Activated T-helper 1 cell treated with anti-CD3 and anti-CD28 coated beads, Interleukin-12 subunit alpha, Interleukin-12 subunit beta, Interleukin-2, Interleukin-4 antibody, amounts not matched to agents 30 ng/mL and 10 ng/mL and 1 ng/mL, durations not matched to agents 14 hours and 24 hours and 36 hours (primary cell): ENCODE measurements at regions of chr4 and their contacts with region 1.

Region 1: DNA sequence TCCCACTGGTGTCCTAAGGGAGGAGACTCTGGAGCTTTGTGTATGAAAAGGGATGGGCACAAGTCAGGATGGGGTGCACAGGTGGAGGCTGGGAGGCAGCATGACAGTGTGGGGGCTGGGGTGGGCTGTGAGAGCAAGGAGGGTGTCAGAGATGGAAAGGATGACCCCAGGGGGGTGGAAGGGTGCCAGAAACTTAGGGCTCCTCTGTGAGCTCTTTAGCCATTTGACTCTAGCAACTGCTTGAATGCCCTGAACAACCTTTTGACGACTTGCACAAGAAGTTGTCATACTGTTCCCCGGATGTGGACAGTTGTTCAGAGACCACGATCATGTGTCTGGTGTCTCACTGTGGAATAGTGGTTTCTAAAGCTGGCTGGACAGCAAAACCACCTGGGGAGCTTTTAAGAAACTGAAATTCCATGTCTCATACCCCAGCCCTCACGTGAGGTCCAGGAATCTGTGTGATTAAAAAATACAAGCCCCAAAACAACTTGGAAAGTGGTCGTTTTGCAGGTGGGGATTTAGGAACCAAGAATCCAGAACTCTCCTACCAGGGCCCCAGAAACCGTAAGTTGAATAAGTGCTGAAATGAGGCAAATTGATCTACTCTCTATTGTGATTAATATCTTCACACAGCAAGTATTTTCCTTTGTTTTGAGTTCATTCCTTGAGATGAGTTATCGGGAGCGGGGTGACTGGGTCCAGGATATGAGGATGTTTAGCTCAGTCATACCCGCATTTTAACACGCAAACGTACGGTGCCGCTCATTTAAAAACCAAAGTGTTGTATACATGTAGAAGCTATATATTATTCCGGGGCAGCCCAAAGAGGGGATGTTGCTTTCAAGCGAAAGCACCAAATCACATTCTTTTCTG is 3.4 kb downstream of the RHOH start:
- DNase-seq: peak; percentile 76
- H3K4me3 Mint-ChIP-seq: peak overlapping the region; percentile 95
- H3K27ac Mint-ChIP-seq: peak overlapping the region; percentile 97
- H3K4me1 Mint-ChIP-seq: peaks cover 60% of the 10 kb centered on the region
- H3K27me3 Mint-ChIP-seq: no peaks in the 10 kb centered on the region

Region 2: DNA sequence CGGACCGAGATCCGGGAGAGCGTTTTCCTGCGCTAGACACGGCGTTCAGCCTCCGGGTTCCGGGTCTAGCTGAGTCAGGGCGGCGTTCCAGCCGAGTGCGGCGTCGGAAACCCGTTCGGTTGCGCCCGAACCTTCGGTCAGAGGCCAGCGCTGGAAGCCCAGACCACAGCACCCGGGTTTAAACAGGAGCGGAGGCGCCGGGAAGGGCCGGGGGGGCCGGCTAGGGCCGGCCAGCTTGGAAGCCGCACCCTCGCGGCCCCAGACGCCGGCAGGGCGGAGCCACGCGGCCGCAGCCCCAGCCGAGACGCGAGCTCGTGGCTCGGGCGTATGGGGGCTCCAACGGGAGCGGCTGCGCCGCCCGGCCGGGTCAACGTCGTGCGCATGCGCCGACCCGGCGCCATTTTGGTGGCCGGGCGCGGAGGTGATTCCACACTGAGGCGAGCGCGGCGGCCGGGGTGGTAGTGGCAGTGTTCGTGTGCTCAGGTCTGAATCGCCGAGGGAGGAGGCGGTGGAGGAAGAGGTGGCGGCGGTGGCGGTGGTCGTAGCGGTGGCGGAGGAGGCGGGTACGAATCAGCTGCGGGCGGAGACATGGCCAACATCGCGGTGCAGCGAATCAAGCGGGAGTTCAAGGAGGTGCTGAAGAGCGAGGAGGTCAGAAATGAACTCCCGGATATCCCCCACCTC is 502.4 kb before region 1 on chr4 and contains the start of gene UBE2K:
- intact Hi-C with region 1: loop called (anchors 5 kb)
- DNase-seq: peak; percentile 91
- H3K4me3 Mint-ChIP-seq: peak within 1 kb of the TSS; percentile 97
- H3K27ac Mint-ChIP-seq: peak within 1 kb of the TSS; percentile 97
- H3K4me1 Mint-ChIP-seq: peaks cover 37% of the 10 kb centered on the region
- H3K27me3 Mint-ChIP-seq: no peaks in the 10 kb centered on the region
- total RNA-seq, gene UBE2K: 92.2 and 96.4 TPM in 2 replicates

Region 3: GRCh38 chr4:40020221-40020943 is 179.9 kb before region 1 on chr4:
- intact Hi-C with region 1: no loop called
- DNase-seq: no peak
- H3K4me3 Mint-ChIP-seq: no peak overlapping the region
- H3K27ac Mint-ChIP-seq: no peak overlapping the region
- H3K4me1 Mint-ChIP-seq: no peaks in the 10 kb centered on the region
- H3K27me3 Mint-ChIP-seq: no peaks in the 10 kb centered on the region

Region 4: DNA sequence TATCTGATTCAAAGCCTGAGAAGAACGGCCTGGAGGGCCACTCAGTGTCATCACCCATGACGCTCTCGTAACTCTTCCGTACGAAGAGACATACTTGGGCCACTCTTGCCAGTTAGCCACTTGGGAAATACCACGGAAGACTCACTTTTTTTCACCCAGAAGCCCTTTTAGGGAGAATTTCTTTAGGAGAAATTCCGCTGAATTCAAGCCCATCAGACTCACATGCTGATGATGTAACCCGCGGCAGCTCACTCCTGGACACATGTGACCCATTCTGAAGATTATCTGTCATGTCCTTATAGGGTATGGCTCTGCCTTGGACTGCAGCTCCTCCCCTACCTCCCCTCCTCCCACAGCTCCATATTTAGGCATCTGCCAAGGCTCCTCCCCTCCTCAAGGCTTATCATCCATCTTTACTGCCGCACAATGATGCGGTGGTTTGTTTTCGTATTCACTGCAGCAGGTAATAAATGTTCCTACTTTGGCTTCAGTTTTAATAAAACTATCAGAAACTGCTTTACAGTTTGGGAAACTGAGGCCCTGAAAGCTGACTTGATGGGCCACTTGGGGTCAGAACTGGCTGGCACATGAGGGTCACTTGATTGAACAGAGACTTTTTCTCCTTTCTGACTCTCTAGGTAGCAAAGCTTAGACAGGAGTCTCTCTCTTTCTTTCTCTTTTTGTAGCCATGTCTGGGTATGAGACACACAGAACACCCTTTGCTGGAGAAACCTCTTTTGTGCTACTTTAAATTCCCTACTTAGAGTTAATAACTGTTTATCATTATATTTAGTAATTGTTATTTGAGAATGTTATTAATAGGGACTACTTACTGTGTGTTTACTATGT is 38.7 kb after region 1 on chr4:
- intact Hi-C with region 1: loop called (anchors 1 kb)
- DNase-seq: peak; percentile 72
- H3K4me3 Mint-ChIP-seq: peak overlapping the region; percentile 83
- H3K27ac Mint-ChIP-seq: peak overlapping the region; percentile 92
- H3K4me1 Mint-ChIP-seq: peaks cover 90% of the 10 kb centered on the region
- H3K27me3 Mint-ChIP-seq: no peaks in the 10 kb centered on the region

Region 5: GRCh38 chr4:40309250-40309774 is 109.1 kb after region 1 on chr4:
- intact Hi-C with region 1: loop called (anchors 1 kb)
- DNase-seq: peak; percentile 81
- H3K4me3 Mint-ChIP-seq: peak overlapping the region; percentile 67
- H3K27ac Mint-ChIP-seq: peak overlapping the region; percentile 94
- H3K4me1 Mint-ChIP-seq: peaks cover 88% of the 10 kb centered on the region
- H3K27me3 Mint-ChIP-seq: no peaks in the 10 kb centered on the region

Region 6: DNA sequence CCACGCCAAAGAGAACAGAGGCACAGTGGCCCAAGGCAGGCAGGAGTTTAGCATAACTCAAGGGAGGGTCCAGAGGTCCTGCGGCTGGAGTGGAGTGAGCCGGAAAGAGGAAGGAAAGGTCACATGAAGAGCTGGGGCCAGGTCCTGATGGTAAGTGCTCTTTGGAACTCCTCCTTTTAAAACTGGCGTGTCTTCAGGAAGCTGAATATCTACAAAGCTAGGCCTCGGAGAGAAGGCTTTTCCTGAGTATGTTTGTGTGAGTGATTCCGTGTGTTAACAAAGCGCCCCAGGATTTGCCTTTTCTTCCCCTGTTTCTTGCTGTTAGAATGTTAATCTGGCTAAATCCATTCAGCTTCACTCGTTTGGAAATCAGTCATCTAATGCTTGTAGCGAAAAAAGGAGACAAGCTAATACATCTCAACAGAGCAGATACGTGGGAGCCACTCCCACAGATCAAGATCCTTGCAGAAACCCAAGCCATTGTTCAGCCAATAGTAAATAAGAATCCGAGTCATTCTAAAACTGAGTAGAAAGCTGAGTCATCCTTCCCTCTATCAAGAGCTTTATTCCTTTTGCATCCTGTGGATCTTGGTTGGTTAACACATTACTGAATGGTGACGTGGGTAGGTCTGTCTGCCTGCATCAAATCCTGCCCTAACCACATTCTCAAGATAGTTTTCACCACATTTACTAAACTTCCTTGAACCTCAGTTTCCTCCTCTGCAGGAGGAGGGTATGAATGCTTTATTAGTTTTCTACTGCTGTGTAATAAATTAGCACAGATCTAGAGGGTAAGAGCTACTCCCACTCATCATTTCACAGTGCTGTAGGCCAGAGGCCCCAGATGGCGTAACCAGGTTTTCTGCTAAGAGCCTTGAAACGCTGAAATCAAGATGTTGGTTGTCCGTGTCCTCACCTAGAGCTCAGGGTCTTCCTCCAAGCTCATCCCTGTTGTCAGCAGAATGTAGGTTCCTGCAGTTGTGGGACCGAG is 472.6 kb after region 1 on chr4:
- intact Hi-C with region 1: loop called (anchors 5 kb)
- DNase-seq: peak; percentile 59
- H3K4me3 Mint-ChIP-seq: peak overlapping the region; percentile 57
- H3K27ac Mint-ChIP-seq: peak overlapping the region; percentile 86
- H3K4me1 Mint-ChIP-seq: peaks cover 68% of the 10 kb centered on the region
- H3K27me3 Mint-ChIP-seq: no peaks in the 10 kb centered on the region